ENCODE measurements at regions of chr13 and their contacts with region 1.

Region 1: DNA sequence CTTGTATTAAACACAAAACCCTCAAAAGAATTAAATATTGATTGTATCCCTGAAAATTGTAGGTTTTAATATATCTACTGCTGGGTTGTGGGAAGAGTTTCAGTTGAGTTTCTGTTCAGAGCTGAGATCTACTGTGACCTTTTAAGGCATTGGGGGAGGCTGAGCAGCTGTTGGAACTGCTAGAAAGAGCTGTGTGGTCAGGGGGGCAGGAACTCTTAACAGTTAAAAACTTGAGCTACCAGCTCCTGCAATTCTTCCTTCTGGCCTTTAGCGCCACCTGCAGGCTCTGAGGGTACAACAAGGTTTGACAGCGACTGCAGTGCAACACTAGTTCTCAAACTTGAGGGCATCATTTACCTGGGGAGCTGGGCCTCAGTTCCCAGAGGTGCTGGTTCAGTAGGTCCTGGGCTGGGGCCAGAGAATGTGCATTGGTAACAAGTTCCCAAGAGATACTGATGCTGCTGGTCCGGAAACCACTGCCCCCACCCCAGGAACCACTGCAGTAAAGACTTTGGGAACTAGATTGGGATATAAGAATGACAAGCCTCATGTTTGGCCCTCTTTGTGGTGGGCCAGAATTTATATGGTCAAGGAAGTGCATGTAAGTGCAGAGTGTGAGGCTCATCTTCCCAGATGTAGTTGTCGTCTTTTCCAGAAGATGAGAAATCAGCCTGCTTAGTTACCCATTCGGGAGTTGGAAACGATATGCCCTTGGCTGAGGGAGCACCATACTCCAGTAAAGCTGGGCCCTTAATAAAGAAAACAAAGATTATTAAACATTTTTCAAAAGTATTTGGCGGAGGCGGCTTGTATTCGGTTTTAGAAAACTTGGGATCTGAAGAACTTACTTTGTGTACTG is 2.6 kb downstream of the RNASEH2B start:
- DNase-seq: no peak
- H3K4me3 ChIP-seq: no peak overlapping the region
- H3K27ac ChIP-seq: no peak overlapping the region
- H3K4me1 ChIP-seq: peaks cover 46% of the 10 kb centered on the region
- H3K27me3 ChIP-seq: no peaks in the 10 kb centered on the region
- CTCF ChIP-seq: peak; percentile 64 to 74 (median 71)
- POLR2A ChIP-seq: no peak

Region 2: DNA sequence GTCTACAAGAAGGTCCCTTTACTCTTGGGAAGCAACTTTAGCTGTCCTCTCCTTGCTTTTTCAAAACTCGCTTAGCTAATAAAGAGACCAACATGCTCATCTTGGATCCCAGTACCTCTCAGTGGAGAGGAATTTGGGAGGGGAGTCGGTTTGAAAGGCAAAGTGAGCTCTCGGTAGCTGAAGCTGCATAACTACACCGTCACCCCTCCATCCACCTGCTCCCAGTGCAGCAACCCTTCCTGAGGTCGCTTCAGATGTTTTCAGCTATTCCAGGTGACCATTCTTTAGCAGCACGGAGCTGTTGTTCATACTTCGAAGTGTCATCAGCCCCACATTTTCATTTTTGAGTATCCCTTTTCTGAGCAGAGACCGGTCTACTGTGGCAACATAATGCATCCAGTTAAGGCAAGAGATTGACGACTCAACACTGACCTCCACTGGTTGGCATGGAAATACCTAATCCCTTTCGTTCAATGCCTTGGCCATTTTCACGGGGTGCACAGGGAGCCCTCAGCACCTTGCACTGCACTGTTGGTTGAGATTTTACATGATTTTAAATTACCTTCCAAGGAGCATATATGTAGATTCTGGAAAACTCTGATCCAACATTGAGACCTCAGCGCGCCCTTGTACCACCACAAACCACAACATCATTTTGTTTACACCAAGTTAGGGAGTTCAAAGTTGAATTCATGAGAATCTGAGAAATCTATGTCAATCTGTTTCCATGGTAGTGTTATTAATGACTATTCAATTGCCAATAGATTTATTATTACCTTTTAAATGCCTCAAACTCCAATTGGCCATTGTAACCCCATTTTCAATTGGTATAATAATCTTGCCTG is 110.9 kb before region 1 on chr13:
- intact Hi-C with region 1: loop called (anchors 10 kb)
- DNase-seq: no peak
- H3K4me3 ChIP-seq: no peak overlapping the region
- H3K27ac ChIP-seq: no peak overlapping the region
- H3K4me1 ChIP-seq: peaks cover 12% of the 10 kb centered on the region
- H3K27me3 ChIP-seq: no peaks in the 10 kb centered on the region
- CTCF ChIP-seq: peak; percentile 35 to 80 (median 62)
- POLR2A ChIP-seq: no peak

Region 3: GRCh38 chr13:51070005-51070649 is 158.0 kb after region 1 on chr13:
- intact Hi-C with region 1: no loop called
- DNase-seq: peak in 1 of 2 donors; percentile 88
- H3K4me3 ChIP-seq: no peak overlapping the region
- H3K27ac ChIP-seq: no peak overlapping the region
- H3K4me1 ChIP-seq: no peaks in the 10 kb centered on the region
- H3K27me3 ChIP-seq: no peaks in the 10 kb centered on the region
- CTCF ChIP-seq: peak; percentile 89 to 95 (median 90)
- POLR2A ChIP-seq: no peak

Region 4: GRCh38 chr13:51101636-51102235 is 189.6 kb after region 1 on chr13:
- intact Hi-C with region 1: no loop called
- DNase-seq: no peak
- H3K4me3 ChIP-seq: no peak overlapping the region
- H3K27ac ChIP-seq: no peak overlapping the region
- H3K4me1 ChIP-seq: no peaks in the 10 kb centered on the region
- H3K27me3 ChIP-seq: no peaks in the 10 kb centered on the region
- CTCF ChIP-seq: no peak
- POLR2A ChIP-seq: no peak

Region 5: DNA sequence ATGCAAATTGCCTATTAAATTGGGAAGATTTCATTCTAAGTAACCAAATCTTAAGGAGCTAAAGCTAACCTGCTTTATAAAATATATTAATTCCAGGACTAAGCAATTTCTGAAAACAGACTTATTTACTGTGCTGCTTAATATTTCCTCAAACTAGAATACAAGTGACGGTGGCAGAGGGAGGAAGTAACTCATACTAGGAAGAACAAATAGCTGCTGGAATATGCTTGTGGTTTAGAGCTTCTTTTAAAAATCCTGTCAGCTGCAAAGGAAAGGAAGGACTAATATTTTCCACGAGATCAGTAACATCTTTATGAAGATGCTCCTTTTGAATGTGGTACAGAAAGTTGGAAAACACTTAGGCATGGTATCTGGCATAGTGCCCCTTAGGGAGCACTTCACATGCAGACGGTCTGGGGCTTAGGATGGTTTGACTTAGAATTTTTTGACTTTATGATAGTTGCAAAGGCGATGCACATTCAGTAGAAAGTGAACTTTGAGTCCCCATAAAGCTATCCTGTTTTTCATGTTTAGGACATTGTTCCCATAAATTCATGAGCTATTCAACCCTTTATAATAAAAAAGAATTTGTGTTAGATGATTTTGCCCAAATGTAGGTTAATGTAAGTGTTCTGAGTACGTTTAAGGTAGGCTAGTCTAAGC is 1726.6 kb after region 1 on chr13:
- intact Hi-C with region 1: no loop called
- DNase-seq: no peak
- H3K4me3 ChIP-seq: no peak overlapping the region
- H3K27ac ChIP-seq: no peak overlapping the region
- H3K4me1 ChIP-seq: no peaks in the 10 kb centered on the region
- H3K27me3 ChIP-seq: no peaks in the 10 kb centered on the region
- CTCF ChIP-seq: no peak
- POLR2A ChIP-seq: no peak

Measured in vagina (tissue), 2 donors.